ENCODE measurements at regions of chr17 and their contacts with region 1.

Region 1: GRCh38 chr17:4215882-4216570 is 47.8 kb downstream of the ANKFY1 start:
- DNase-seq: no peak
- H3K4me3 ChIP-seq: no peak overlapping the region
- H3K27ac ChIP-seq: no peak overlapping the region
- H3K4me1 ChIP-seq: no peaks in the 10 kb centered on the region
- H3K27me3 ChIP-seq: peaks cover 0 to 12% (median 2%) of the 10 kb centered on the region in 5 experiments

Region 2: DNA sequence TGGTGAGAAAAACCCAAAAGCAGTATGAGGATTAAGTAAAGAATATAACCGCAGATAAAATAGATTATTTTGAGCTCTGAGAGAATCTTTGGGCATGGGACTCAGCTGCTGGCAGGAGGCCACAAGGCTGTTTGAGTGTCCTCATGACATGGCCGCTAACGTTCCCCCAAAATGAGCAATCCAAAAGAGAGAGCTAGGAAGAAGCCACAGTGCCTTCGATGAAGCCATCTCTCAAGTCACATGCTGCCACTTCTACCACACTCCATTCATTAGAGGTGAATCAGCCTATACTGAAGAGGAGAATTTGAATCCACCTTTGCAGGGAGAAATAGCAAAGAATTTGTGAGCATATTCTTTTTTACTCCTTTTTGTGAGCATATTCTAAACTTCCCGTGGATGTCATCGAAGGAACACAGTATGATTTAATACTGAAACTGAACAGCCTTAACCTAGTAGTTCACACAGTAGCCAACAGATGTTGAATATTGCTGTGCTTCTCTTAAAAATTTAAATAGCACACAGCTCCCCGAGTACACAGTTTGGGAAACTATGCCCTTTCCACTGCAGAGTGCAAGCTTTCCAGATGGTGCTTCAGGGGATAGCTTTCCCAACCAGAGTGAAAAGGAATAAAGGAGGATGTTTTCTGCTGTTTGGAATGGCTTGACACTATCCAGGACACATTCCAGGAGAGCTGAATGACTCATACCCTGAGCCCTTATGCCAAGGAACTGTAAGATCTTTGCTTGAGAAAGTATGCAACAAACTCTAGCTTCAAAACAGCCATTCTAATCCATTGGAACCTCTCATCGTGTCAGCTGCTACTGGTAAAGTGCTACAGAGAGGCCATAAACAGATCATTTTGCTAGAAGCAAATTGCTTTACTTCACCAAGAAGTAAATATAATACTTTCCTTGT is 13.9 kb after region 1 on chr17:
- CTCF ChIA-PET with region 1: interaction called, 13 read pairs
- POLR2A ChIA-PET with region 1: no interaction called
- DNase-seq: no peak
- H3K4me3 ChIP-seq: no peak overlapping the region
- H3K27ac ChIP-seq: no peak overlapping the region
- H3K4me1 ChIP-seq: no peaks in the 10 kb centered on the region
- H3K27me3 ChIP-seq: no peaks in the 10 kb centered on the region

Region 3: GRCh38 chr17:4249452-4250029 is 33.5 kb after region 1 on chr17:
- CTCF ChIA-PET with region 1: interaction called, 30 read pairs
- POLR2A ChIA-PET with region 1: no interaction called
- DNase-seq: peak; percentile 69 to 90 (median 77)
- H3K4me3 ChIP-seq: no peak overlapping the region
- H3K27ac ChIP-seq: no peak overlapping the region
- H3K4me1 ChIP-seq: peaks cover 0 to 7% (median 5%) of the 10 kb centered on the region in 4 experiments
- H3K27me3 ChIP-seq: no peaks in the 10 kb centered on the region

Region 4: DNA sequence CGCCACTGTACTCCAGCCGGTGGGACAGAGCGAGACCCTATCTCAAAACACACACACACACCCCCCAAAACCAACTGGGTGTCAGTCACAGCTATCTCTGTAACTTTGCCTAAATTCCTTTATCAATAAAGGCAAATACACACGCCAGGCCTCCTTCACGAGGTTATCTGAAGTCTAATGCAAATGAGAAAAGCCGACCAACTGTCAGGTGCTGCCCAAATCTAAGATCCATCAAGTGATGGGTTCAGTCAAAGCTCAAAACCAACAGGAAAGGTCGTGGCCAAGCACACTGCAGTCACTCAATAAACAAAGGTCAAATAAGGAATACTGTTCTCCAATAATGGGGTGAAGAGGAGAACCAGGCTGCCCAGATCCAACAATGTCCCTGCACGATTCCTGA is 46.7 kb after region 1 on chr17:
- CTCF ChIA-PET with region 1: interaction called, 20 read pairs
- POLR2A ChIA-PET with region 1: no interaction called
- DNase-seq: no peak
- H3K4me3 ChIP-seq: peak overlapping the region in 6 of 7 experiments; percentile 80 to 96 (median 92)
- H3K27ac ChIP-seq: peak overlapping the region; percentile 85 to 88
- H3K4me1 ChIP-seq: peaks cover 10 to 18% (median 15%) of the 10 kb centered on the region in 4 experiments
- H3K27me3 ChIP-seq: no peaks in the 10 kb centered on the region

Region 5: GRCh38 chr17:4412933-4413831 is 197.2 kb after region 1 on chr17:
- CTCF ChIA-PET with region 1: interaction called, 25 read pairs
- POLR2A ChIA-PET with region 1: no interaction called
- DNase-seq: peak; percentile 89 to 95 (median 92)
- H3K4me3 ChIP-seq: peak overlapping the region in 2 of 7 experiments; percentile 11 to 48
- H3K27ac ChIP-seq: no peak overlapping the region
- H3K4me1 ChIP-seq: peaks cover 0 to 5% (median 2%) of the 10 kb centered on the region in 4 experiments
- H3K27me3 ChIP-seq: no peaks in the 10 kb centered on the region

Region 6: GRCh38 chr17:4420692-4421131 is 204.7 kb after region 1 on chr17:
- CTCF ChIA-PET with region 1: interaction called, 25 read pairs
- POLR2A ChIA-PET with region 1: no interaction called
- DNase-seq: peak; percentile 83 to 90 (median 87)
- H3K4me3 ChIP-seq: no peak overlapping the region
- H3K27ac ChIP-seq: no peak overlapping the region
- H3K4me1 ChIP-seq: peaks cover 0 to 4% (median 0%) of the 10 kb centered on the region in 4 experiments
- H3K27me3 ChIP-seq: no peaks in the 10 kb centered on the region